GM10248 (cell line): ENCODE measurements at regions of chr3 and their contacts with region 1.

Region 1: GRCh38 chr3:27681245-27681748 is 40.8 kb downstream of the EOMES start:
- DNase-seq: peak; percentile 65
- CTCF ChIP-seq: peak; percentile 55

Region 2: DNA sequence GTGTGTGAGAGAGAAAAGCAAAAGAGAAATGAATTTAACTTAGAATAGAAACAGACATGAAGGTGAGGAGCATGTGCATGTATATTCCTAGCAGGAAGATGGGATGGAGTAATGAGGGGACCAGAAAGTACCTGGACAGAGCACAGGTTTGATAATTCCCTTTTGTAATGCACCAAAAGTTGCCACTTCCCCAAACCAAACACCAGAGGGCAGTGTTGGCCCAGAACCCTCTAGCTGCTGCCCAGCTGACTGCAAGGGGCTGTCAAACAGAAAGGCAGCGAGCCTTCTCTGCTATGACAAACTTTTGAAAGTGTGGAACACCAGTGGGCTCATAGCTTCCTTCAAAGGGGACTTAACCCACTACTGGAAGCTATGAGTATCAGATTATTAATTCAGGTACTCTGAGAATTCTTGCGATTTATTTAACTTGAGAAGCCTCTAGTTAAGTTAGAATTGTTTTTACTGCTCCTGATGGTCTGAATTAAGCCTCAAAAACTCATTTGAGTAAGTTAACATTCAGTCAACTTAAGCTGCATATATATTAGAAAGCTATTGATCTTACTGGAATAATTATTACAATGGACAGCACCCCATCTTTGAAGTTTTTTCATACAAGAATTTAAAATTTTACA is 547.0 kb before region 1 on chr3:
- CTCF ChIA-PET with region 1: interaction called, 14 read pairs
- POLR2A ChIA-PET with region 1: no interaction called
- DNase-seq: peak; percentile 58
- CTCF ChIP-seq: peak; percentile 83

Region 3: GRCh38 chr3:27312044-27312668 is 369.1 kb before region 1 on chr3:
- CTCF ChIA-PET with region 1: interaction called, 10 read pairs
- POLR2A ChIA-PET with region 1: no interaction called
- DNase-seq: peak; percentile 50
- CTCF ChIP-seq: peak; percentile 66

Region 4: GRCh38 chr3:27556887-27557286 is 124.4 kb before region 1 on chr3:
- CTCF ChIA-PET with region 1: no interaction called
- POLR2A ChIA-PET with region 1: no interaction called
- DNase-seq: no peak
- CTCF ChIP-seq: no peak

Region 5: DNA sequence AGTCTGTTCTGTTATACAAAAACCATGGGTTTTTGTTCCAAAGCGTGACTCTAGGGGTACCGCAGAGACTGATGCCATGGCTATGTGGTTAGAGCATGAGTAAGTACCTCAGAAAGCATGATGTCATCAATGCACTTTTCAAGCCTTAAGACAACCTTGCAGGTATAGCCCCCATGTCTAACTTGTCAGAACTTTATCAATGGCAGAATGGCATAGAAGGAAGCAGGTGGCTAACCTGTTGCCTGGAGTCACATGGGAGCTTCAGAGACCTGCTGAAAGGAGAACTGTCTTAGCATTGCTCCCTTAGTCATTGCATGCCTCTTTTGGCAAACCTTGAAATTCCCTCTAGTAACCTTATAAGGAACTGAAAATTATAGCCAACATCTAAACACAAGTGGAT is 11.7 kb before region 1 on chr3:
- CTCF ChIA-PET with region 1: interaction called, 37 read pairs
- POLR2A ChIA-PET with region 1: no interaction called
- DNase-seq: peak; percentile 29
- CTCF ChIP-seq: no peak

Region 6: DNA sequence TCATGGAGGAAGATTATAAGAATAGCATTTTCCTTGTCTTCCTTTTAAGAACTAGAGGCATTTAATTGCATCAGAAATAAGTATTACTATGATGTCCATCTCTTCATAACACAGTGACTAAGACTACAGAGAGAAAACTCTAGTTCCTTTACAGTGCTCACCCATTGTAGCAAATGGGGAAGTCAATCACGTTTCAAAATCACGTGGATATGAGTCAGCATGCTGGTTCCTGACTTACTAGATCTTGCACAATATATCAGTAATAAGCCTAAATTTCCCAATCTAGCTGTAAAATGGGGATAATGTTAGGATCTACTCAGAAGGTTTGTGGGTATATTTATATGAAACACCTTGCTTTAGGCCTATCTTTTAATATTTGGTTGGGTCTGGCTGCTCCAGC is 295.6 kb after region 1 on chr3:
- CTCF ChIA-PET with region 1: no interaction called
- POLR2A ChIA-PET with region 1: no interaction called
- DNase-seq: no peak
- CTCF ChIP-seq: no peak